ENCODE measurements at regions of chr17 and their contacts with region 1.

Region 1: DNA sequence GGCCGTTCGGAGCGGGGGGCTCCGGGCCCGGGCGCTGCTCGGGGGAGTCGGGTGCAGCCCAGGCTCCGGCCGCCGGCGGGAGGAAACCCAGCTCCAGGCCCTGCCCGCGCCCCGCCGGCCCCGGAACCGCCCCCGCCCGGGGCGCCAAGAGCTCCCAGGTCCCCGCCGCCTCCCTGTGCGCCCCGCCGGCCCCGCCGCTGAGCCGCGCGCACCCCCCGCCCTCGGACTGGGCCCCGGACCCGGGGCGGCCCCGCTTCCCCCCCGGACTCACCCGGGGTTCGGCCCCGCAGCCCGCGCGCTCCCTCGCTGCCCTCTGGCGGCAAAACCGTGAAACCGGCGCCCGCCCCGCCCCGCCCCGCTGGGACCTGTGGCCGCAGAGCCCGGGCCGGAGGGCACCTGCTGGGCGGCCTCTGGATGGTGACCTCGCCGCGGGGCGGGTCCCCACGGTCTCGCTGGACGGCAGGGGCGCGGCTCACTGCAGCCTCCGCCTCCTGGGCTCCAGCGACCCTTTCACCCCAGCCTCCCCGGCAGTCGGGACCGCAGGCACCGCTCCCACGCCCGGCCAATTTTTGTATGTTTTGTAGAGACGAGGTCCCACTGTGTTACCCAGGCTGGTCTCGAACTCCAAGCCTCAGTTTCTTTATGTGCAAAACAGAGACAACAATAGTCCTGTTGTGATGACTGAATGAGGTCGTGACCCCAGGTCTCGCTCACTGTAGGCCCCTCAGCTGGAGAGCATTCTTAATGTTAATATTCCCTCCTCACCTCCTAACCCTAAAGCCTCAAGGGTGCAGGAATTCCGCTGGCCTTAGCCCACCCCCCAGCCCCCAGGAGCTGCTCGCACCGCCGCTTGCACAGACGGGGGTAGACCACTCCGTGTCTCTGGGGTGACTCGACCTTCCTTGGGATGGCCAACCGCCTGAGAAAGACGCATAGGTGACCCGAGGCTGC is 33.6 kb upstream of the RPH3AL start:
- DNase-seq: peak; percentile 75 to 79
- H3K4me3 ChIP-seq: peak overlapping the region in 1 of 3 donors; percentile 56
- H3K27ac ChIP-seq: peak overlapping the region in 1 of 3 donors; percentile 53
- H3K4me1 ChIP-seq: peaks cover 6 to 13% of the 10 kb centered on the region in 2 donors
- H3K27me3 ChIP-seq: no peaks in the 10 kb centered on the region
- CTCF ChIP-seq: peak in 5 of 6 experiments; percentile 41 to 94 (median 81)
- POLR2A ChIP-seq: no peak

Region 2: DNA sequence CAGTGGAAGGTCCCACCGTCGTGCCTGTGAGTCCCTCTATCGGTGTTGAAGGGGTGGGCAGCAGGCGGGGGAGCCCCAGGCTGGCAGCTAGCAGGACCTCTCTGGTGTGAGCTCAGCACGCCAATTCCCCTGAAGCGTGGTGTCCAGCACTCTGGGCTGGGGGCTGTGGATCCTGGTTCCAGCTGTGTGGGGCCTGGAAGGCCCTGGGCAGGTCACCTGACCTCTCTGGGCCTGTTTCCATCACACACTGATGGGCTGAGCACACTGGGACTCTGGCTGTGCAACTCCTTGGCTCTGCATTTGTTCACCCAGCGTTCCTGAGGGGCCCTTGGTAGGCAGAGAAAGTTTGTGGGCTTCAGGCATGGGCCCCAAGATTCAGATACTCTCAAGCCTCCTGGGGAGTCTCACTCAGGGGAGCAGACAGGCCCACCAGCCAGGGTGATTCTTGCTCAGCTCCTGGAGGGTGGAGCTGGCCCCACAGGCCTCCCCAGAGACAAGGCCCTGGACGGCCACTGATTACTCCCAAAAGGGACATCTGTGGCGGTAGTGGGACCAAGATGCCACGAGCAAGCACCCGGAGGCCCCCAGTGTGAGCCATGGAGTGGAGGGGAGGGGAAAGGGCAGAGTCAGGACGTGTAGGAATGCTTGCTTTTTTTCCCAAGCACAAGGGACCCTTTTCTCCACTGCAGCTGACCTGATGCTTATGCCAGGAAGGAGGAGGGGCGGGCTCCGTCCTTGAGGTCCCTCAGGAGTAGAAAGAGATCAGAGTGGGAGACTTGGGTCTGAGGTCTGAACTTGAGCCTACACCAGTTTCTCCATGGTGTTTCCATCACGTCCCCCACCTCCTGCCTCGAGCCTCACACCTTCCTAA is 240.3 kb before region 1 on chr17:
- intact Hi-C with region 1: loop called (anchors 5 kb)
- DNase-seq: no peak
- H3K4me3 ChIP-seq: no peak overlapping the region
- H3K27ac ChIP-seq: no peak overlapping the region
- H3K4me1 ChIP-seq: peaks cover 0 to 4% of the 10 kb centered on the region in 2 donors
- H3K27me3 ChIP-seq: no peaks in the 10 kb centered on the region
- CTCF ChIP-seq: no peak
- POLR2A ChIP-seq: no peak

Region 3: DNA sequence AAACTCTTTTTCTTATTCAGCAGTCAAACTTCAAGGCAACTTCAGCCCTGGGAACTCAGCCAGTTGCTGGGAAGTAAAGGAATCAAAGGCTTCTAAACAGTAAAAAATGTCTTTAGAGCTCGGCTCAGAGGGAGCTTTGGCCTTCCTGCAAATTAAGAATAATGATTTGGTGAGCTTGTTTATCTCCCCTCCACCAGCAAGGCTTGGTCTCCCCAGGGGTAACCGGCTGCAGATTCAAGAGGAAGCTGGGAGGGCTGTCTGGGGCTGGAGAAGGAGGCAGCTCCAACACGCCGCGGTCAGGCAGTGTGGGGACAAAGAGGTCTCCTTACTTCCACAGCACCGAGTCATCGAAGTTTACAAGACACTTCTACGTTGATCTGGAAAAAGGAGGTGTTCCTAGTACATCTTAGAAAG is 187.0 kb before region 1 on chr17:
- intact Hi-C with region 1: no loop called
- DNase-seq: no peak
- H3K4me3 ChIP-seq: no peak overlapping the region
- H3K27ac ChIP-seq: no peak overlapping the region
- H3K4me1 ChIP-seq: peaks cover 0 to 6% of the 10 kb centered on the region in 2 donors
- H3K27me3 ChIP-seq: peaks cover 4% of the 10 kb centered on the region
- CTCF ChIP-seq: no peak
- POLR2A ChIP-seq: no peak

Region 4: GRCh38 chr17:309361-309888 is 76.8 kb before region 1 on chr17:
- intact Hi-C with region 1: loop called (anchors 10 kb)
- DNase-seq: no peak
- H3K4me3 ChIP-seq: no peak overlapping the region
- H3K27ac ChIP-seq: no peak overlapping the region
- H3K4me1 ChIP-seq: no peaks in the 10 kb centered on the region
- H3K27me3 ChIP-seq: no peaks in the 10 kb centered on the region
- CTCF ChIP-seq: peak in 2 of 6 experiments; percentile 23 to 30
- POLR2A ChIP-seq: no peak